PC-3 (cell line): ENCODE measurements at regions of chr6 and their contacts with region 1.

Region 1: GRCh38 chr6:100116411-100117194 is 122.6 kb upstream of the MCHR2 start:
- DNase-seq: peak; percentile 79
- ATAC-seq: peak; percentile 81
- H3K4me3 ChIP-seq: no peak overlapping the region
- H3K27ac ChIP-seq: no peak overlapping the region
- H3K4me1 ChIP-seq: peaks cover 11% of the 10 kb centered on the region; the same call in 1 of the 2 replicates
- H3K27me3 ChIP-seq: no peaks in the 10 kb centered on the region
- CTCF ChIP-seq: peak; percentile 84

Region 2: GRCh38 chr6:100065348-100065747 is 51.3 kb before region 1 on chr6:
- CTCF ChIA-PET with region 1: no interaction called
- POLR2A ChIA-PET with region 1: no interaction called
- intact Hi-C with region 1: no loop called
- DNase-seq: no peak
- ATAC-seq: no peak
- H3K4me3 ChIP-seq: no peak overlapping the region
- H3K27ac ChIP-seq: no peak overlapping the region
- H3K4me1 ChIP-seq: no peaks in the 10 kb centered on the region
- H3K27me3 ChIP-seq: no peaks in the 10 kb centered on the region
- CTCF ChIP-seq: no peak

Region 3: GRCh38 chr6:100228831-100229641 is 112.4 kb after region 1 on chr6:
- CTCF ChIA-PET with region 1: no interaction called
- POLR2A ChIA-PET with region 1: no interaction called
- intact Hi-C with region 1: loop called (anchors 5 kb)
- DNase-seq: peak; percentile 78
- ATAC-seq: peak; percentile 98
- H3K4me3 ChIP-seq: peak overlapping the region; percentile 71
- H3K27ac ChIP-seq: peak overlapping the region; percentile 20; the same call in 1 of the 2 replicates
- H3K4me1 ChIP-seq: peaks cover 41% of the 10 kb centered on the region
- H3K27me3 ChIP-seq: no peaks in the 10 kb centered on the region
- CTCF ChIP-seq: no peak; the same call in 1 of the 2 replicates

Region 4: GRCh38 chr6:100300221-100300736 is 183.7 kb after region 1 on chr6:
- CTCF ChIA-PET with region 1: no interaction called
- POLR2A ChIA-PET with region 1: no interaction called
- intact Hi-C with region 1: loop called (anchors 5 kb)
- DNase-seq: peak; percentile 93
- ATAC-seq: peak; percentile 84
- H3K4me3 ChIP-seq: peak overlapping the region; percentile 41
- H3K27ac ChIP-seq: peak overlapping the region; percentile 93
- H3K4me1 ChIP-seq: peaks cover 44% of the 10 kb centered on the region
- H3K27me3 ChIP-seq: no peaks in the 10 kb centered on the region
- CTCF ChIP-seq: no peak